Esophagus muscularis mucosa (tissue), 4 donors: ENCODE measurements at regions of chr7 and their contacts with region 1.

Region 1: GRCh38 chr7:50793115-50793946 is 10.6 kb upstream of the GRB10 start:
- DNase-seq: no peak
- H3K4me3 ChIP-seq: peak overlapping the region; percentile 64 to 94 (median 72)
- H3K27ac ChIP-seq: peak overlapping the region; percentile 75 to 85 (median 80)
- H3K4me1 ChIP-seq: peaks cover 20 to 46% (median 35%) of the 10 kb centered on the region in 4 donors
- H3K27me3 ChIP-seq: no peaks in the 10 kb centered on the region
- CTCF ChIP-seq: no peak
- EP300 ChIP-seq: no peak
- POLR2A ChIP-seq: no peak

Region 2: GRCh38 chr7:50687575-50688225 is 105.6 kb before region 1 on chr7:
- intact Hi-C with region 1: loop called (anchors 5 kb)
- DNase-seq: no peak
- H3K4me3 ChIP-seq: no peak overlapping the region
- H3K27ac ChIP-seq: peak overlapping the region; percentile 40 to 87 (median 83)
- H3K4me1 ChIP-seq: peaks cover 34 to 64% (median 59%) of the 10 kb centered on the region in 4 donors
- H3K27me3 ChIP-seq: no peaks in the 10 kb centered on the region
- CTCF ChIP-seq: no peak
- EP300 ChIP-seq: no peak
- POLR2A ChIP-seq: no peak

Region 3: GRCh38 chr7:50826371-50827172 is 33.2 kb after region 1 on chr7:
- intact Hi-C with region 1: no loop called
- DNase-seq: no peak
- H3K4me3 ChIP-seq: no peak overlapping the region
- H3K27ac ChIP-seq: no peak overlapping the region
- H3K4me1 ChIP-seq: peaks cover 0 to 4% (median 0%) of the 10 kb centered on the region in 4 donors
- H3K27me3 ChIP-seq: peaks cover 0 to 16% (median 0%) of the 10 kb centered on the region in 4 donors
- CTCF ChIP-seq: no peak
- EP300 ChIP-seq: no peak
- POLR2A ChIP-seq: no peak

Region 4: DNA sequence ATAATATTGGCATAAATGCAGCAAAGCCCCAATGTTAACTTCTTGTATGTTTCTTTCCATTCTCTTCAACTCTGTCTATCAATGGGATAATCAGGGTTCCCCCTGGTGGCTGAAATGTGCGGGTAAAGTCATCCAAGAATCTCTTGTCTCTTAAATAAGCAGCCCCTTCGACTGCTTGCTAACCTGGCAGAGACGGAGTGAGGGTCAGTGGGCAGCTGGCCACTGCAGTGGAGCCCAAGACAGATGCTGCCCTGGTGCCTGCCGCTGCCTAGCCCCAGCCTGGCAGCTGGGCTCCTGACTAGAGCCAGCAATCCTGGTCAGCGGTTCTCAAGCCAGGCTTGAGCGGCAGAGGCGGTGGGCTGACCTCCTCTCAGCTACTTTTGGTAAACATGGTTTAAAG is 274.4 kb after region 1 on chr7:
- intact Hi-C with region 1: loop called (anchors 5 kb)
- DNase-seq: peak; percentile 92
- H3K4me3 ChIP-seq: no peak overlapping the region
- H3K27ac ChIP-seq: peak overlapping the region in 2 of 4 donors; percentile 23 to 32
- H3K4me1 ChIP-seq: peaks cover 16 to 50% (median 39%) of the 10 kb centered on the region in 4 donors
- H3K27me3 ChIP-seq: no peaks in the 10 kb centered on the region
- CTCF ChIP-seq: peak; percentile 53 to 77 (median 65)
- EP300 ChIP-seq: no peak
- POLR2A ChIP-seq: no peak